GM12878 (cell line): ENCODE measurements at regions of chr12 and their contacts with region 1.

Region 1: GRCh38 chr12:106841510-106842302 is 67.2 kb downstream of the RIC8B start:
- DNase-seq: no peak
- ATAC-seq: peak; percentile 79
- H3K4me3 ChIP-seq: no peak overlapping the region
- H3K27ac ChIP-seq: no peak overlapping the region
- H3K4me1 ChIP-seq: no peaks in the 10 kb centered on the region
- H3K27me3 ChIP-seq: no peaks in the 10 kb centered on the region
- CTCF ChIP-seq: peak; percentile 44 to 68 (median 60); a peak in 5 of 6 replicates
- EP300 ChIP-seq: no peak
- POLR2A ChIP-seq: no peak
- RAD21 ChIP-seq: peak; percentile 83

Region 2: GRCh38 chr12:106386813-106387535 is 454.7 kb before region 1 on chr12:
- CTCF ChIA-PET with region 1: interaction called, 51 read pairs
- POLR2A ChIA-PET with region 1: no interaction called
- RAD21 ChIA-PET with region 1: interaction called, 44 read pairs
- SMC1A ChIA-PET with region 1: interaction called, 27 read pairs
- in situ Hi-C with region 1: loop called (anchors 5 kb)
- intact Hi-C with region 1: loop called (anchors 1 kb)
- DNase-seq: no peak
- ATAC-seq: no peak
- H3K4me3 ChIP-seq: no peak overlapping the region
- H3K27ac ChIP-seq: no peak overlapping the region
- H3K4me1 ChIP-seq: no peaks in the 10 kb centered on the region
- H3K27me3 ChIP-seq: no peaks in the 10 kb centered on the region
- CTCF ChIP-seq: no peak
- EP300 ChIP-seq: no peak
- POLR2A ChIP-seq: no peak
- RAD21 ChIP-seq: no peak

Region 3: DNA sequence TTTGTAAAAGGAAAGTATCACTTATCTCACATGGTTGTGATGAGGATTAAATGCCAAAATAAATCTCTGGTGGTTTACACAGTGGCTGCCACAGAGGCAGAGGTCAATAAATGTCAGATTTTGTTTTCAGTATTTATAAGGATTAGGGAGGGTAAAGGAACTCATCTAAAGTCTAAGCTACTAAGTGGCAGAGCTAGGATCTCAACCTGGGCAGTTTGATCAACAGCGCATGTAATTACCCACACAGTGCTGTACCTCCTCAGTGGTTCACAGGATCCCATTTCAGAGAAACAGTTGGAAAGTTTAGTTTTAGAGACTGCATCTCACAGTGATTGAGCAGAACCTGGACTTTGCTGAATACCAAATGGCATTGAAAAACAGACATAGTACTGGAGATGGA is 112.1 kb before region 1 on chr12:
- CTCF ChIA-PET with region 1: interaction called, 11 read pairs
- POLR2A ChIA-PET with region 1: no interaction called
- RAD21 ChIA-PET with region 1: interaction called, 3 read pairs
- SMC1A ChIA-PET with region 1: interaction called, 3 read pairs
- in situ Hi-C with region 1: no loop called
- intact Hi-C with region 1: no loop called
- DNase-seq: no peak
- ATAC-seq: no peak
- H3K4me3 ChIP-seq: no peak overlapping the region
- H3K27ac ChIP-seq: no peak overlapping the region
- H3K4me1 ChIP-seq: no peaks in the 10 kb centered on the region
- H3K27me3 ChIP-seq: no peaks in the 10 kb centered on the region
- CTCF ChIP-seq: no peak
- EP300 ChIP-seq: no peak
- POLR2A ChIP-seq: no peak
- RAD21 ChIP-seq: no peak

Region 4: DNA sequence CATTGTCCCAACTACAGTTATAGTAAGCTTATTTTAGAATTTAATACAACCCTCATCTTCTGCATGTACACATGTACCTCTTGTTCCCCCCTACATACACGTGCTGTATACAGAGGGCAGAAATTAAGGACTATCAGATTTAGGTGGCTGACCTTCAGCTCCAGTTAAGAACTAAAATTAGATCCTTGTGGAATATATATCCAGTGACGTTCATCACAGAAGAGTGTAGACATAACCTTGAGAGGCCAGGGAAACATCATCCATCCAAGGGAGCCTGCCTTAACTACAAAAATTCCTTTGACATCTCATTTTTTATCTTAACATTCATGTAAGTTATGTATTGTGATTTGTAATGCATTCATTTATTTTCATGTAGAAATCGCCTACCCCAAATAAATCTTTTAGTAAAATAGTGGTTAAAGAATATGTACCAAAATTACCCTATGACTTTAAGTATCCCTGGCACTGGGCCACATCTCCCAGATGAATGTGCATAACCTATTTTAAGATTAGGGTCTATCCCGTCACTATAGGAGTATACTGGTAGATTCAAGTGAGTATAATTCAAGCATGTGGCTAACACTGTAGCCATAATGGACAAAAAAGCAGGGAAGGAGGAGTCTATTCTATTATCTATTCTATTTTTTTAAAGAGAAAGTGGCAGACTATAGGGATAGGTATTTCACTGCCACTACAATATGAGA is 39.7 kb before region 1 on chr12:
- CTCF ChIA-PET with region 1: interaction called, 3 read pairs
- POLR2A ChIA-PET with region 1: no interaction called
- RAD21 ChIA-PET with region 1: interaction called, 4 read pairs
- SMC1A ChIA-PET with region 1: interaction called, 10 read pairs
- in situ Hi-C with region 1: no loop called
- intact Hi-C with region 1: no loop called
- DNase-seq: no peak
- ATAC-seq: no peak
- H3K4me3 ChIP-seq: no peak overlapping the region
- H3K27ac ChIP-seq: no peak overlapping the region
- H3K4me1 ChIP-seq: no peaks in the 10 kb centered on the region
- H3K27me3 ChIP-seq: no peaks in the 10 kb centered on the region
- CTCF ChIP-seq: no peak
- EP300 ChIP-seq: no peak
- POLR2A ChIP-seq: no peak
- RAD21 ChIP-seq: no peak

Region 5: GRCh38 chr12:106871496-106871895 is 29.8 kb after region 1 on chr12:
- CTCF ChIA-PET with region 1: interaction called, 10 read pairs
- POLR2A ChIA-PET with region 1: no interaction called
- RAD21 ChIA-PET with region 1: interaction called, 5 read pairs
- SMC1A ChIA-PET with region 1: interaction called, 3 read pairs
- in situ Hi-C with region 1: no loop called
- intact Hi-C with region 1: no loop called
- DNase-seq: no peak
- ATAC-seq: peak; percentile 57
- H3K4me3 ChIP-seq: no peak overlapping the region
- H3K27ac ChIP-seq: no peak overlapping the region
- H3K4me1 ChIP-seq: no peaks in the 10 kb centered on the region
- H3K27me3 ChIP-seq: no peaks in the 10 kb centered on the region
- CTCF ChIP-seq: no peak
- EP300 ChIP-seq: no peak
- POLR2A ChIP-seq: no peak
- RAD21 ChIP-seq: no peak